GM12878 (cell line): ENCODE measurements at regions of chr9 and their contacts with region 1.

Region 1: GRCh38 chr9:112379177-112380101 is 469 bp upstream of the HSDL2 start:
- DNase-seq: peak; percentile 94
- ATAC-seq: peak; percentile 92
- H3K4me3 ChIP-seq: peak overlapping the region; percentile 88
- H3K27ac ChIP-seq: peak overlapping the region; percentile 95
- H3K4me1 ChIP-seq: peaks cover 17% of the 10 kb centered on the region
- H3K27me3 ChIP-seq: no peaks in the 10 kb centered on the region
- CTCF ChIP-seq: no peak
- EP300 ChIP-seq: no peak
- POLR2A ChIP-seq: peak; percentile 86
- RAD21 ChIP-seq: no peak

Region 2: DNA sequence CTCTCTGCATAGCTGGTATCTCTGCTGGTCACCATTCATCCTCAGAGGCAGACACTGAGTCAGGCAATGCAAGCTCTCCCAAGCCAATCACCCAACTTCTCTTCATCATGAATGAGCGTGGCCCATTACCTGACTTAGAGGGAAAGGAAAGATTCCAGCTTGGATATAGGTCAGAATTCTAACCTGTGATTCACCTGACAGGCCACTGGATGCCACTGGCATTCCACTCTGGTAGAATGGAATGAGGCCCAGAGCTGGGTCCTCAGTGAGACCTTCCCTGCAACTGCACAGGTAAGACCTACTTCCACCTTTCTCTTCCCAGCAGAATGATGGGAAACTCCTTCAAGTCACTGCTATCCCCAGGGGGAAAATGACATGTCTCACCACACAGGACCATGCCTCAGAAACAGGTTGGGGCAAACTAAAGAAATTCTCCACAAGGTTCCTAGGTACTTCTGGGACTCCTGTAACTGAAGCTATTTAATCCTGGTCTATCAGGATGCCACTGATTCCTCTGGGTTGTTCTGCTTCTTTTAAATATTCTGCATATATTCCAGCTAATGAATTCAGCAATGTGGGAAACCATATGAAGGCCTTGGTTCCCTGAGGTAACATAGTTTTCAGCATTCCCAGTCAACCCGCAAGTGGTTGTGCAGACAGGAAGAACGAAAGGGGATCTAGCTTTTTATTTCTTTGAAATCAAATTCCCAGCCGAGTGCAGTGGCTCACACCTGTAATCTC is 266.3 kb before region 1 on chr9:
- CTCF ChIA-PET with region 1: interaction called, 12 read pairs
- POLR2A ChIA-PET with region 1: no interaction called
- RAD21 ChIA-PET with region 1: interaction called, 6 read pairs
- SMC1A ChIA-PET with region 1: interaction called, 10 read pairs
- in situ Hi-C with region 1: no loop called
- intact Hi-C with region 1: no loop called
- DNase-seq: no peak
- ATAC-seq: peak; percentile 75
- H3K4me3 ChIP-seq: no peak overlapping the region
- H3K27ac ChIP-seq: no peak overlapping the region
- H3K4me1 ChIP-seq: no peaks in the 10 kb centered on the region
- H3K27me3 ChIP-seq: no peaks in the 10 kb centered on the region
- CTCF ChIP-seq: peak; percentile 56 to 74 (median 57); a peak in 5 of 6 replicates
- EP300 ChIP-seq: no peak
- POLR2A ChIP-seq: no peak
- RAD21 ChIP-seq: peak; percentile 88

Region 3: GRCh38 chr9:112348257-112349007 is 31.0 kb before region 1 on chr9:
- CTCF ChIA-PET with region 1: no interaction called
- POLR2A ChIA-PET with region 1: no interaction called
- RAD21 ChIA-PET with region 1: no interaction called
- SMC1A ChIA-PET with region 1: no interaction called
- in situ Hi-C with region 1: no loop called
- intact Hi-C with region 1: no loop called
- DNase-seq: no peak
- ATAC-seq: no peak
- H3K4me3 ChIP-seq: peak overlapping the region; percentile 21; the same call in 1 of the 2 replicates
- H3K27ac ChIP-seq: no peak overlapping the region
- H3K4me1 ChIP-seq: no peaks in the 10 kb centered on the region
- H3K27me3 ChIP-seq: no peaks in the 10 kb centered on the region
- CTCF ChIP-seq: no peak
- EP300 ChIP-seq: no peak
- POLR2A ChIP-seq: no peak
- RAD21 ChIP-seq: no peak

Region 4: GRCh38 chr9:112361601-112362000 is 17.8 kb before region 1 on chr9:
- CTCF ChIA-PET with region 1: interaction called, 9 read pairs
- POLR2A ChIA-PET with region 1: interaction called, 7 read pairs
- RAD21 ChIA-PET with region 1: interaction called, 3 read pairs
- SMC1A ChIA-PET with region 1: interaction called, 24 read pairs
- in situ Hi-C with region 1: no loop called
- intact Hi-C with region 1: no loop called
- DNase-seq: no peak
- ATAC-seq: peak; percentile 71
- H3K4me3 ChIP-seq: no peak overlapping the region
- H3K27ac ChIP-seq: no peak overlapping the region
- H3K4me1 ChIP-seq: no peaks in the 10 kb centered on the region
- H3K27me3 ChIP-seq: no peaks in the 10 kb centered on the region
- CTCF ChIP-seq: peak in 2 of 3 experiments; percentile 30 to 55; a peak in 2 of 6 replicates
- EP300 ChIP-seq: no peak
- POLR2A ChIP-seq: no peak
- RAD21 ChIP-seq: peak; percentile 60

Region 5: GRCh38 chr9:112411626-112412027 is 32.2 kb after region 1 on chr9:
- CTCF ChIA-PET with region 1: no interaction called
- POLR2A ChIA-PET with region 1: no interaction called
- RAD21 ChIA-PET with region 1: no interaction called
- SMC1A ChIA-PET with region 1: no interaction called
- in situ Hi-C with region 1: no loop called
- intact Hi-C with region 1: no loop called
- DNase-seq: no peak
- ATAC-seq: no peak
- H3K4me3 ChIP-seq: no peak overlapping the region
- H3K27ac ChIP-seq: no peak overlapping the region
- H3K4me1 ChIP-seq: no peaks in the 10 kb centered on the region
- H3K27me3 ChIP-seq: no peaks in the 10 kb centered on the region
- CTCF ChIP-seq: no peak
- EP300 ChIP-seq: no peak
- POLR2A ChIP-seq: no peak
- RAD21 ChIP-seq: no peak

Region 6: GRCh38 chr9:112717661-112718341 is 338.4 kb after region 1 on chr9 and contains the start of gene INIP:
- CTCF ChIA-PET with region 1: interaction called, 6 read pairs
- POLR2A ChIA-PET with region 1: interaction called, 3 read pairs
- RAD21 ChIA-PET with region 1: interaction called, 11 read pairs
- SMC1A ChIA-PET with region 1: no interaction called
- in situ Hi-C with region 1: no loop called
- intact Hi-C with region 1: loop called (anchors 5 kb)
- DNase-seq: peak; percentile 87
- ATAC-seq: peak; percentile 94
- H3K4me3 ChIP-seq: peak within 1 kb of the TSS; percentile 82
- H3K27ac ChIP-seq: peak within 1 kb of the TSS; percentile 69
- H3K4me1 ChIP-seq: peaks cover 17% of the 10 kb centered on the region
- H3K27me3 ChIP-seq: no peaks in the 10 kb centered on the region
- CTCF ChIP-seq: peak; percentile 26 to 54 (median 26); a peak in 4 of 6 replicates
- EP300 ChIP-seq: no peak
- POLR2A ChIP-seq: peak; percentile 93
- RAD21 ChIP-seq: peak; percentile 55
- polyA plus RNA-seq, gene INIP: 61.2 to 66.5 TPM

Region 7: GRCh38 chr9:112819635-112820496 is 440.4 kb after region 1 on chr9:
- CTCF ChIA-PET with region 1: interaction called, 4 read pairs
- POLR2A ChIA-PET with region 1: no interaction called
- RAD21 ChIA-PET with region 1: interaction called, 7 read pairs
- SMC1A ChIA-PET with region 1: no interaction called
- in situ Hi-C with region 1: no loop called
- intact Hi-C with region 1: loop called (anchors 5 kb)
- DNase-seq: peak; percentile 26
- ATAC-seq: peak; percentile 96
- H3K4me3 ChIP-seq: no peak overlapping the region
- H3K27ac ChIP-seq: no peak overlapping the region
- H3K4me1 ChIP-seq: peaks cover 13% of the 10 kb centered on the region
- H3K27me3 ChIP-seq: no peaks in the 10 kb centered on the region; a peak in 2 of 4 replicates
- CTCF ChIP-seq: peak; percentile 69 to 76 (median 76)
- EP300 ChIP-seq: no peak
- POLR2A ChIP-seq: no peak
- RAD21 ChIP-seq: peak; percentile 85